Heart left ventricle (tissue), 16 donors: ENCODE measurements at regions of chr5 and their contacts with region 1.

Region 1: GRCh38 chr5:10353241-10354047 is at the start of gene MARCHF6:
- DNase-seq: peak; percentile 95 to 98 (median 96)
- ATAC-seq: peak; percentile 93 to 97 (median 97)
- H3K4me3 ChIP-seq: peak within 1 kb of the TSS; percentile 71 to 98 (median 90)
- H3K27ac ChIP-seq: peak within 1 kb of the TSS; percentile 94 to 99 (median 98)
- H3K4me1 ChIP-seq: peaks cover 5 to 57% (median 33%) of the 10 kb centered on the region in 12 donors
- H3K27me3 ChIP-seq: peaks cover 0 to 6% (median 0%) of the 10 kb centered on the region in 9 donors
- CTCF ChIP-seq: no peak
- POLR2A ChIP-seq: peak; percentile 17 to 96
- total RNA-seq, gene MARCHF6: 108 to 192 (median 161) TPM

Region 2: DNA sequence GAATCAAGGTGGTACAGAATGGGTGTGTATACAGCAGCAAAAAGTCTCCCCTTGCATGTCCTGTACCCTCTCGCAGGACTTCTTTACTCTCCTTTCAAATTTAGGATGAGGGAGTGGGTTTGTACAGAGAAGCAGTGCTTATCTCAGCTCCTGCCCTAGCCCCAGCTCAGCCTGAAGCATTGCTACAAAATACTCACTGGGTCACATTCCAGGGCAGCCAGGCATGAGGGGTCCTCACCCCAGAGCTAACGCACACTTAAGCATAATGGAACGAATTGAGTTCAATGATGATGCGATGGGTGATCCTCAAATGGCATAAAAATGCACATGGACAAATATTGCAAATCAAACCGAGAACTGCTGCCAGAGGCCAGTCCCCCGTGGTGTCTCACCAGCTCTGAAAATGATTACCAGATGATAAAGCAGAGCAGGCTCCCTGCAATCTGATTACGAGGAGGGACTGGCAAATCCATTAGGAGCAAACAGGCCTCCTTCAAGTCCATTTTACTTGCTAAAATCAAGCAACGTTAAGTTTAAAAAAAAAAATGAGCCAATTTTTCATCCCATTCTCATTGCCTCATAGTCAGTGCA is 491.7 kb before region 1 on chr5:
- intact Hi-C with region 1: no loop called
- DNase-seq: no peak
- ATAC-seq: no peak
- H3K4me3 ChIP-seq: no peak overlapping the region
- H3K27ac ChIP-seq: no peak overlapping the region
- H3K4me1 ChIP-seq: no peaks in the 10 kb centered on the region
- H3K27me3 ChIP-seq: no peaks in the 10 kb centered on the region
- CTCF ChIP-seq: no peak
- POLR2A ChIP-seq: no peak

Region 3: GRCh38 chr5:10283927-10284635 is 69.4 kb before region 1 on chr5:
- intact Hi-C with region 1: loop called in 1 of 10 experiments (anchors 10 kb)
- DNase-seq: peak; percentile 81 to 91 (median 85)
- ATAC-seq: peak; percentile 67 to 89 (median 86)
- H3K4me3 ChIP-seq: no peak overlapping the region
- H3K27ac ChIP-seq: no peak overlapping the region
- H3K4me1 ChIP-seq: peaks cover 0 to 17% (median 6%) of the 10 kb centered on the region in 12 donors
- H3K27me3 ChIP-seq: no peaks in the 10 kb centered on the region
- CTCF ChIP-seq: peak; percentile 82 to 98 (median 94)
- POLR2A ChIP-seq: no peak

Region 4: GRCh38 chr5:10301842-10302610 is 51.4 kb before region 1 on chr5:
- intact Hi-C with region 1: loop called in 1 of 10 experiments (anchors 1 kb)
- DNase-seq: peak; percentile 83 to 93 (median 87)
- ATAC-seq: peak; percentile 94 to 97 (median 96)
- H3K4me3 ChIP-seq: peak overlapping the region in 7 of 12 donors; percentile 3 to 30 (median 26)
- H3K27ac ChIP-seq: peak overlapping the region; percentile 32 to 81 (median 71)
- H3K4me1 ChIP-seq: peaks cover 0 to 36% (median 12%) of the 10 kb centered on the region in 12 donors
- H3K27me3 ChIP-seq: no peaks in the 10 kb centered on the region
- CTCF ChIP-seq: no peak
- POLR2A ChIP-seq: no peak

Region 5: DNA sequence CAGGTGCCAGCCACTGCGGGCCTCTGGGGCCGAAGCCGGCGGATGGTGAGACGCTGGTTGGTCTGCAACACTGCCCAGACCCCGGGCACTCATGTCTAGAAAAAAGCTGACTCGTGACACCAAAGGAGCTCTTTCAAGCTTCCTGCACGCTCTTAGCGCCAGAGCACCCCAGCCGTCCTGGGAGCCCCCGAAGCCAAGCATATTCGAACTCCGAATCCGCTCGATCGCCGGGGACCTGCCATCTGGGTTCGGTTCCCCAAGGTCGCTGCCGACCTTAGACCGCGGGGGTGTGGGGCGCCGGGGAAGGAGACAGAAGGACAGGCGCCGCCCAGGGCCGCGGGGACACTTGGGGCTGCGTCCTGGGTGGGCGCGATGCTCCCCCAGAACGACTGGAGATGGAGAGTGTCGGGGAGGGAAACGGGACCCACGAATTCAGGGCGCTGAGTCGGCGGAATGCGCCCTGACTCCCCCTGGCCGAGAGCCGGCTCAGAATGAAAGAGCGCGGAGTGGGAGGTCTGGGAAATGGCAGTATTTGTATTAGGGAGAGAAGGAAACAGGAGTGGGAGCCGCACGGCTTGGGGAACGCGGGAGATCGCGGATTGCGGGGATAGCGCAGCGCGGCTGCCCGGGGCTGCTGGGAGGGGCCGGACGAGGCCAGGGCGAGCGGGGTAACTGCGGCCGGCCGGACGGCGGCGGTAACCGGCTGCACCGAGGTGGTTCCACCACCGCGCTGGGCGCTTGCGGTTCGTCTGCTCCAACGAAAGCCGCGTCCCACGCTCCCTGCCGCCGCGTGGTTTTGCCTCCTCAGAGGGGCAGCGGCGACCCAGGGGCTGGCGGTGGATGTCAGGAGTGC is 20.1 kb before region 1 on chr5:
- intact Hi-C with region 1: loop called in 3 of 10 experiments (anchors 1 to 2 kb)
- DNase-seq: peak; percentile 37 to 78 (median 57)
- ATAC-seq: peak; percentile 40 to 69 (median 63)
- H3K4me3 ChIP-seq: peak overlapping the region; percentile 25 to 76 (median 62)
- H3K27ac ChIP-seq: peak overlapping the region; percentile 58 to 88 (median 81)
- H3K4me1 ChIP-seq: peaks cover 0 to 52% (median 35%) of the 10 kb centered on the region in 12 donors
- H3K27me3 ChIP-seq: peaks cover 0 to 19% (median 0%) of the 10 kb centered on the region in 9 donors
- CTCF ChIP-seq: peak in 5 of 12 donors; percentile 10 to 32 (median 29)
- POLR2A ChIP-seq: no peak

Region 6: DNA sequence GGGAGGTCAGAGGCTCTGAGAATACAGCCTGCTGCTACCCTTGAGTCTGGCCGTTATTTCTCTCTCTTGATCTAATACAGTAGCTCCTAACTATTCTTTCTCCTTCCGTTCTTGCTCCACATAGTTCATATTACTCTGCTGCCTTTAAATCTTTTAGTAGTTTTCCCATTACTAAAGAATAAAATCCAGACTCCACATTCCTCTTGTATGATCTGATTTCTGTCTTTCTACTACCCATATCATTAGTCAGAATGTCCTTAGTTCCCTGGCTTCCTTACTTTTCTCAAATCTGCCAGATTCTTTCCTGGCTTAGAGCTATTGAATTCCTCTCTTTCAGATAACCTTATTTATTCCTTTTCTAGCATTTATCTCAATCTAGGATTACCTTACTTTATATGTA is 40.0 kb after region 1 on chr5:
- intact Hi-C with region 1: loop called in 1 of 10 experiments (anchors 5 kb)
- DNase-seq: no peak
- ATAC-seq: no peak
- H3K4me3 ChIP-seq: no peak overlapping the region
- H3K27ac ChIP-seq: peak overlapping the region in 7 of 12 donors; percentile 5 to 57 (median 25)
- H3K4me1 ChIP-seq: peaks cover 0 to 8% (median 0%) of the 10 kb centered on the region in 12 donors
- H3K27me3 ChIP-seq: no peaks in the 10 kb centered on the region
- CTCF ChIP-seq: no peak
- POLR2A ChIP-seq: no peak

Region 7: DNA sequence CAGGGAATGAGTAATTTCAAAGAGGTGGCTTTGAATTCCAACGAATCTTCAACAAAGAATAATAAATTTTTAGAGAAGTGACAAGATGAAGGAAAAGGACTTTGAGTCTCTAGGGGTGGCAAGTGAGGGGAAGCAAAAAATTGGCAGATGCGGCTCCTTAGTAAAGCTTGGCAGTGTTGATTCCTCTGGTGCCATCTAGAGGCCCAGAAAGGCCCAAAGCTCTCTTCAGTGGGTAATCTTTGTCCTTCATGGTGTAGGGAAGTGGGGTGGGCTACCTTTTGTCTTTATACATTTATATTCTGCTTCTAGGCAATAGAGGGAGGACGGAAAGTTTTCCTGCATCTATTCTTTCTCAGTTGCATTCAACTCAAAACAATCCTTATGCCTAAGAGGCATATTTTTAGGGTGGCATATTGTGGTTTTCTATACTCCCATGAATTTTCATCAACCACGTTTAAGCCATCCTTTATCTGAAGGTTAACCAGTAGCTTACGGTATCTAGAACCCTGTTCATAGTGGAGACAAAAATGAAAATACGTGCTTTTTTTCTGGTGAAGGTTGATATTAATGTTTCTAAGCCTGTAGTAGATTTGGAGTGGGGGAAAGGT is 70.8 kb after region 1 on chr5:
- intact Hi-C with region 1: loop called in 1 of 10 experiments (anchors 10 kb)
- DNase-seq: peak in 2 of 5 donors; percentile 33 to 43
- ATAC-seq: peak in 3 of 4 donors; percentile 65 to 76 (median 67)
- H3K4me3 ChIP-seq: no peak overlapping the region
- H3K27ac ChIP-seq: no peak overlapping the region
- H3K4me1 ChIP-seq: peaks cover 0 to 31% (median 0%) of the 10 kb centered on the region in 12 donors
- H3K27me3 ChIP-seq: no peaks in the 10 kb centered on the region
- CTCF ChIP-seq: peak; percentile 18 to 63 (median 46)
- POLR2A ChIP-seq: no peak

Region 8: DNA sequence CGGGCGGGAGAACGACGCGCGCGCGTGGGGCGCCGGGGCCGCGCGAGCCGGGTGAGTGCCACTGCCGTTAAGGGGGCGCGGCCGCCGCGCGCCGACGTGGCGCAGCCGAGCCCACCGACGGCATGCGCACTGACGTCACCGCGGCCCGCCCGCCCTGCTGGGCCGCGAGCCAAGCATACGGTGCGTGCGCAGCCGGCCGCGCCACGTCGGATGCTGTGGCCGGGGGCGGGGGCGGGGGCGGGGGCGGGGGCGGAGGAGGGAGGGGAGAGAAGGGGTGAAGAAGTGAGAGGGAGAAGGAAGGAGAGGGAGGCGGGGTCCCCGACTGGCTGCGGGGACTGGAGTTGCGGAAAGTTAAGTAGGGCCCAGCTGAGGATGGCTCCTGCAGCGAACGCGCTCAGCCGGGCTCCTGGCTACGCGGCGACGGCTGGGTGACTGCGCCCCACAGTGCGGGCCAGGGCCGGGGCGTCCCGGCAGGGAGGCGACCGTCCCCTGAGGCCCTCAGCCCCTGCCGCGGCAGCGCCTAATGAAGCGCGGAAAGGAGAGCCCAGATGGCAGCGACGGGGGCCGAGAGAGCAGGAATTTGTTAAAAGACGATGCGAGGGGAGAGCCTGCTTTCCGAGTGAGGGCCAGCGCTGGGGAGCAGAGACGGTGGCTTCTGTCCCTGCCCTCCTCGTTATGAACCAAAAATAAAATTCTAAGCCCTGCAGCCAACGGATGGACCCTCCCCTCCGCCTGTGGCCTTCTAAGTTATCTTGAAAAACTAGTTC is 407.9 kb after region 1 on chr5 and contains the start of gene DAP:
- intact Hi-C with region 1: loop called in 1 of 10 experiments (anchors 10 kb)
- DNase-seq: peak; percentile 85 to 94 (median 91)
- ATAC-seq: peak; percentile 65 to 94 (median 86)
- H3K4me3 ChIP-seq: peak within 1 kb of the TSS; percentile 59 to 95 (median 75)
- H3K27ac ChIP-seq: peak within 1 kb of the TSS; percentile 83 to 99 (median 95)
- H3K4me1 ChIP-seq: peaks cover 0 to 51% (median 29%) of the 10 kb centered on the region in 12 donors
- H3K27me3 ChIP-seq: no peaks in the 10 kb centered on the region
- CTCF ChIP-seq: no peak
- POLR2A ChIP-seq: peak in 1 of 2 donors; percentile 42
- total RNA-seq, gene DAP: 24.3 to 61.6 (median 28.5) TPM